Kidney (tissue), 22 donors: ENCODE measurements at regions of chr20 and their contacts with region 1.

Region 1: GRCh38 chr20:19784511-19785172 is 26.6 kb downstream of the RIN2 start:
- DNase-seq: peak; percentile 68 to 94 (median 80)
- H3K4me3 ChIP-seq: no peak overlapping the region
- H3K27ac ChIP-seq: no peak overlapping the region
- H3K4me1 ChIP-seq: peaks cover 4 to 24% (median 12%) of the 10 kb centered on the region in 3 donors
- H3K27me3 ChIP-seq: no peaks in the 10 kb centered on the region
- CTCF ChIP-seq: peak; percentile 81

Region 2: DNA sequence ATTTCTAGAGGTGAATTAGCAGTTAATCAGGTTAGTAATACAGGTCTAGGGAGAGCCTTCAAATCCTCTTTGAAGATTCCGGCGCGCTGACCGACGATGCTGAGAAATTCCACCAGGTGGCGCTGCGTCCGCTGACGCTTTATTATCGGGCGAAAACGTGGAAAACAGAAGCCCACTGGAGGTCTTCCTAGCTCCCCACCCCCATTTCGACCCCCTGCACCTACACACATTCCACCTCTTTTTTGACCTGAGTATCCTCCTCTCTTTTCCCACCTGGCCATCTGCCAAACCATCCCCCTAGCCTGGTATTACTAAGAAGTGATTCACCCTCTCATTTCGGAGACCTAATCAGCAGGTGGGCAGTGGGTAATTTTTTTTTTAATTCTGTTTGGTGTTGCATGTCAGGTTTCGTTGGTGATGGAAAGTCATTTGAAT is 91.9 kb before region 1 on chr20:
- intact Hi-C with region 1: loop called (anchors 10 kb)
- DNase-seq: peak in 4 of 5 donors; percentile 56 to 70 (median 66)
- H3K4me3 ChIP-seq: peak overlapping the region in 2 of 3 donors; percentile 35 to 40
- H3K27ac ChIP-seq: no peak overlapping the region
- H3K4me1 ChIP-seq: peaks cover 0 to 4% (median 0%) of the 10 kb centered on the region in 3 donors
- H3K27me3 ChIP-seq: no peaks in the 10 kb centered on the region
- CTCF ChIP-seq: peak; percentile 90

Region 3: GRCh38 chr20:19710336-19711120 is 74.1 kb before region 1 on chr20:
- intact Hi-C with region 1: no loop called
- DNase-seq: peak in 3 of 5 donors; percentile 23 to 74 (median 55)
- H3K4me3 ChIP-seq: no peak overlapping the region
- H3K27ac ChIP-seq: no peak overlapping the region
- H3K4me1 ChIP-seq: peaks cover 16 to 17% (median 17%) of the 10 kb centered on the region in 3 donors
- H3K27me3 ChIP-seq: no peaks in the 10 kb centered on the region
- CTCF ChIP-seq: no peak

Region 4: DNA sequence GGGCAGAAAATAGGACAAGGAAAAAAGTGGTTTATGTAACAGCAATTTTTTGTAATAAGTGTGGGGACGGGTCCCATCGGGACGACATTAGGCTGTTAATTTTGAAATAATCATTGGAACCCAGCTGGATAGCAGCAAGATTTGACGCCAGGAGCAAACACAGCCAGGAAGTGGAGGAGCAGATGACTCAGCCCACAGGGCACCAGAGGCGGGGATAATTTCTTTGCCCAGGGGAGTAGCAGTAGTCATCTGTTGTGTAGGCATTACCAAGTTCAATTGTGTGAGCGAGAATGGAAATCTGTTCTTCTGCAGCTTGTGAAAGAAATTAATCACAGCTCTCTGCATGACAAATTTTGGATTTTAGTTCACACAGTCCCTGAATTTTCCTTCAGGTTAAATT is 49.2 kb before region 1 on chr20:
- intact Hi-C with region 1: no loop called
- DNase-seq: peak in 2 of 5 donors; percentile 31 to 86
- H3K4me3 ChIP-seq: no peak overlapping the region
- H3K27ac ChIP-seq: no peak overlapping the region
- H3K4me1 ChIP-seq: no peaks in the 10 kb centered on the region
- H3K27me3 ChIP-seq: no peaks in the 10 kb centered on the region
- CTCF ChIP-seq: no peak

Region 5: GRCh38 chr20:19850198-19850533 is 65.5 kb after region 1 on chr20:
- intact Hi-C with region 1: no loop called
- DNase-seq: peak in 3 of 5 donors; percentile 53 to 77 (median 58)
- H3K4me3 ChIP-seq: no peak overlapping the region
- H3K27ac ChIP-seq: peak overlapping the region in 1 of 2 donors; percentile 72
- H3K4me1 ChIP-seq: peaks cover 5 to 20% (median 16%) of the 10 kb centered on the region in 3 donors
- H3K27me3 ChIP-seq: no peaks in the 10 kb centered on the region
- CTCF ChIP-seq: no peak

Region 6: DNA sequence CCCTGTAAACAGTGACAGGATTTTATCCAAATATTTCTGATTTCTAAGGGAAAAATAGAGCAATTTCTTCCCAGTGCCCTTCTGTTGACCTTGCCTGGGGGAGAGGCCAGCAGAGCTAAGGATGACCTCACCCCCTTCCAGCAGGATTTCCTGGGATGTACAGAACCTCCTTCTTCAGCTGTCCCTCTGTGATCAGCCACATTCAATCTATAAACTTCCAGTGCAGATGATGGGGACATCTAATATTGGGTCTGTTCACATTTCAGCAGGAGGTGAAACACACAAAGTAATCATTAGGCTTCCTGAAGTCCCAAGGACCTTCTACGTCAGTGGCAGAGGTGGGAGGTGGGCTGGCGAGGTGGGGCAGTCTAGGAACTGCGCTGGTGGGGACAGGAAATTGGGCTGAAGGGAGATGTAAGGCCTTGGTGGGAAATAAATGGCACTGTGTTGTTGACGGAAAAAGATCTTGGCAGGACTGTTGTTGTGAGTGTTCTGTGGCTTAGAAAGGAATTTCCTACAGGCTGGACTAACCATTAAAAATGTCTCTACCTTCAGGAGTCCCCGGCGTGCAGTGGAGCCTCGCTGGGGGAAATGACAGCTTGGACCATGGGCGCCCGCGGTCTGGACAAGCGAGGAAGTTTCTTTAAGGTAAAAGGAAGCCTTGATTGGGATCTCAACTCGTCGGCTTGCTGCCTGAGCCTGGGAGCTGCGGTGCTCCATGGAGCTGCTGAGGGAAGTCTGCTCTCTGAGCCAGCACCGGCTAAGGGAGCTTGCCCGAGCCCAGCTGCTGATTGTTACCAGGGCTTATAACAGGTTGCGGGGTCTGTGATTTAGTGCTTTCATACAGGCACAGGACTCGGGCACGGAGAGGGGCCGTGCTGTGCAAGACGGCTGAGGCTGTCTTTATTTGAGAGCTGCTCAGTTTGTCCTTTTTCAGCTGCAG is 104.6 kb after region 1 on chr20:
- intact Hi-C with region 1: no loop called
- DNase-seq: peak; percentile 37 to 85 (median 47)
- H3K4me3 ChIP-seq: peak overlapping the region in 2 of 3 donors; percentile 59 to 75
- H3K27ac ChIP-seq: peak overlapping the region; percentile 85 to 93
- H3K4me1 ChIP-seq: peaks cover 7 to 41% (median 27%) of the 10 kb centered on the region in 3 donors
- H3K27me3 ChIP-seq: no peaks in the 10 kb centered on the region
- CTCF ChIP-seq: no peak